BJ (cell line): ENCODE measurements at regions of chr13 and their contacts with region 1.

Region 1: DNA sequence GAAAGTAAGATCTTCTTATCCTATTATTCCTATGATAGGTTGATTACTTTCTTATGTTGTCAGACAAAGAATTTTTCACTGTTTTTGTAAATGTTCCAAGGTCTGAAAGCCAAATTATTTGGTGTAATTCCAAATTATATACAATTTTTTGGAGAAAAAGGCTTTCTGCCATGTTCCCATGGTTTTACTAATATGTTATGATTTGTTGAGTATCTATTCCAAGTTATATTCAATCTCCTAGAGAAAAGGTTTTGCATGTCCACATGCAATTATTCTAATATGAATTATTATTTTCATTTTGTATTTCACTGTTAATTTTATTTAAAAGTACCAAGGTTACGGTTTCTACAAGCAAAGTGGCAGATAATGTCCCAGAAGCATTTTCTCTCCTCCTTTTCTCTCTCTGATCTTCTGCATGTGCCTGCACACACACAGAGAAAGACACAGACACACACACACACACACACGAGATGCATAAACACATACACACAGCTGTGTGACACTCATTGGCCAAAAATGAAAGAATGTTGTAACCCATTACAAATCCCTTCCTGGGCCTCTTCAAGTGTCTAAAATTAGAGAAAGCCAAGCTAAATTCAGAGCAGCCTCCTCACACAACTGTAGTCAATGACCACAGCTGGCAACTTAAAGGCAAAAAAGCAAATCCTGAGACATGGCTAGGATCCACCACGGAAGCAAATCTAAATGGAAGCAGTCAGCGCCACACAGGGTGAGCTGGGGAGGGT is 621.0 kb downstream of the EFNB2 start:
- DNase-seq: peak; percentile 71
- H3K4me3 ChIP-seq: no peak overlapping the region
- H3K27me3 ChIP-seq: no peaks in the 10 kb centered on the region
- CTCF ChIP-seq: no peak

Region 2: DNA sequence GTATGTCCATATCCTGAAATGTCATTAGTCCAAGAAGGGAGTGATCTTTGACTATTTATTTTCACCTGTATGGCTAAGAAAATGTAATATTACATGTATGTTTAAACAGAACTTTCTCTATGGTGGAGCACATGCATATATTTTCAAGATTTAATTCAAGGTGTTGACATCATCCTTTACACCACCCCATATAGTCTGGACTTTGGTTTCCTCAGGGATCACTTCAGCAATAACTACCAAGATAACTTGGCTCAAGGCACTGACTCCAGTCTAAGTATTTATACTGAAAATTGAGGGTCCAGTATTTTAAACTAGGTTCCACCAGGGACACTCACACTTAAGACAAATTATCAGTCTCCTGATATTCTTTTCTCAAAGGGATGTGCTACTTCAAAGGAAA is 39.6 kb before region 1 on chr13:
- CTCF ChIA-PET with region 1: no interaction called
- POLR2A ChIA-PET with region 1: no interaction called
- DNase-seq: no peak
- H3K4me3 ChIP-seq: no peak overlapping the region
- H3K27me3 ChIP-seq: peaks cover 1% of the 10 kb centered on the region; the same call in 1 of the 2 replicates
- CTCF ChIP-seq: no peak

Region 3: DNA sequence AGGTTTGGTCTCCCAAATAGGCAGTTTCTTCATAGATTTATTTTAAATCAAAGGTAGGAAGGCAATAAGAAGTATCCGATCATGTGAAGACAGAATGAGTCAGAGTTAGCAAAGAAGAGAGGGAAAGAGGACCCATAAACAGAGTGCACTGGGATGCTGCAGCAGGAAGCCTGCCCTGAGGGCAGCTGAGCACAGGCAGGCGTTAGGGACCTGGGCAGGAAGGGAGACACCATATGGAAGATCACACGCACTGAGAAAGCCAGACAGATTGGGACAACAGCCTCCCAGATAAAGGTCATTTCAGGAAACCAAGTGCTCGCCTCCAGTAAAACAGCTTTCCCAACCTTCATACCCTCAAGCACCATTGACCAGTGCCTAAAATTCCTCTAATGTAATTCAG is 23.0 kb after region 1 on chr13:
- CTCF ChIA-PET with region 1: no interaction called
- POLR2A ChIA-PET with region 1: interaction called, 10 read pairs
- DNase-seq: peak; percentile 62
- H3K4me3 ChIP-seq: no peak overlapping the region
- H3K27me3 ChIP-seq: no peaks in the 10 kb centered on the region
- CTCF ChIP-seq: no peak

Region 4: DNA sequence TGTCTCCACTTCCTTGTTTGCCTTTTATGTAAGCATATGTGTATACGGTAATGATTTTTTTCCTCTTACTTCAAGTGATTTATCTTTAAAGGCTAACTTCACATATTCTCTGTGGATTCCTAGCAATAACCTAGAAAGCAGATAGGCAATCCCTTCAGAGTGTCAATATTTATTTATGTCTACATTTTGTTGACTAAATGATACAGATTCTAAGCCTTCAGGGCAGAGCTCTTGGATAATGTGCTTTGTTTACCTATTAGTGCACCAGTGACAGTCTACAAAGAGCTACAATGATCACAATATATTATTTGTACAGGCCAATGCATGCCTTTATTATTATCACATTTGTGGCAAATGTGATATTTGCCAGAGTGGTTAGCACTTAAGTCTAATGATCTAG is 214.8 kb after region 1 on chr13:
- CTCF ChIA-PET with region 1: no interaction called
- POLR2A ChIA-PET with region 1: no interaction called
- DNase-seq: no peak
- H3K4me3 ChIP-seq: no peak overlapping the region
- H3K27me3 ChIP-seq: no peaks in the 10 kb centered on the region
- CTCF ChIP-seq: no peak